GM18951 (cell line): ENCODE measurements at regions of chr14 and their contacts with region 1.

Region 1: GRCh38 chr14:69460093-69460701 is 24.3 kb upstream of the PLEKHD1 start:
- POLR2A ChIP-seq: no peak

Region 2: DNA sequence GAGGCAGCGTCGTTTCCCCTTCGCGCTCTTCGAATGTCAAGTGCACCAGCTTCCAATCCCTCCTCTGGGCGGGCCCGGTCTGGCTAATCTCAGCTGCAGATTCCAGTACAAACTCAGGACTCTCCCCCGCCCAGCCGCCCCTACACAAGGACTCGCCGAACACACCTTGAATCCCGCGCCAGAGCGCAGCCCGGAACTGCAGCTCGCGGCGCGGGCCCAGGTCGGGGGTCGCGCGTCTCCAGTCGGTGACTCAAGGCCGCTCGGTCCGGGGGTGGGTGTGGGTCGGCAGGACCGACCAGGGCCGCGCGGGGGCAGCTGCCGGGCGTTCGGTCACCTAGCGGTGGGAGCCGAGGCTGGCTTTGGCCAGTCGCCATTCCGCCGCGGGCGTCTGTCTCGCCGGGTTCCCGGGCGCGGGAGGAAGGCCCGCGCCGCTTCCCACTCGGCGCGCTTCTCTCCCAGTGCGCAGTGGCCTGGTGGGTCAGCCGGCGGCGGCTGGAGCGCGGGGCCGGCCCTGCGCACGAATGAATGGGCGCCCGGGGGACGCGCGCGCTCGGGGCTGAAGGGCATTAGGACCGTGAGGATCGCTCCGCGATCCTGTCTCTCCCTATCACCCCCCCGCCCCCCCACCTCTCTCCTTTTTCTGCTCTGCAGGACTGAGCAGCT is 200.5 kb before region 1 on chr14 and contains the start of gene GALNT16:
- in situ Hi-C with region 1: loop called (anchors 10 kb)
- POLR2A ChIP-seq: no peak